Vagina (tissue), 2 donors: ENCODE measurements at regions of chr12 and their contacts with region 1.

Region 1: GRCh38 chr12:94149119-94149780 is 873 bp downstream of the PLXNC1 start:
- DNase-seq: no peak
- H3K4me3 ChIP-seq: peak overlapping the region; percentile 52 to 87
- H3K27ac ChIP-seq: peak overlapping the region; percentile 79
- H3K4me1 ChIP-seq: peaks cover 27% of the 10 kb centered on the region
- H3K27me3 ChIP-seq: no peaks in the 10 kb centered on the region
- CTCF ChIP-seq: no peak
- POLR2A ChIP-seq: no peak

Region 2: DNA sequence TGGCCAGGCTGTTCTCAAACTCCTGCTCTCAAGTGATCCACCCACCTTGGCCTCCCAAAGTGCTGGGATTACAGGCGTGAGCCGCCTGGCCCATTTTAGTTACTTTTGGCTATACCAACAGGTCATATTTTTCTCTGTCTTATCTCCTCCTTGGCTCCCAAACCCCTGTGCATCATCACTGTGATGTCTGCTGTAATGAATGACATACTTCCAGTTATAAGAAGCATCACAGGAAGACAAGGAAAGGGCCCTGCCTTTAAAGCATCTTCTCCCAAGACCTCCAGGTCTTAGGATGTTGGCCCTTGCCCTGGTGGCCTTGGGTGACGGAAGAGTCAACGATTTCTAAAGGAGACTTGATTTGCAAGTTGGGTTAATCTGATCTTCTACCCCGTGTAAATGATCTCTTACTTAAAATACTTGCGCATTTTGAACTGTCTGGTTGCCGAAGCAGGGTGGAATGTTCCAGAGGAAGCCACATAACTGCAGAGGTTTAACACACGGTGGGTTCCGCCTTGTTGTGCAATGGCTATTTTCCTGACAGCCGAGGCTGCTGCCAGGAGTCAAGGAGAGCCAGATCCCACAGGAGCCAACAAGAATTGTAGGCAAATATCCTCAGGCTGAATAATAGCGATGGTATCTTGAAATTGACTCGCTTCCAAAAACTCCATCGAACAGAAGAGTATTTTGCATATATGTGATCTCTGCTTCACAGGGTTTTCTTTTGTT is 56.6 kb before region 1 on chr12:
- intact Hi-C with region 1: no loop called
- DNase-seq: no peak
- H3K4me3 ChIP-seq: no peak overlapping the region
- H3K27ac ChIP-seq: peak overlapping the region; percentile 2
- H3K4me1 ChIP-seq: no peaks in the 10 kb centered on the region
- H3K27me3 ChIP-seq: no peaks in the 10 kb centered on the region
- CTCF ChIP-seq: no peak
- POLR2A ChIP-seq: no peak

Region 3: GRCh38 chr12:94123127-94123526 is 26.1 kb before region 1 on chr12:
- intact Hi-C with region 1: no loop called
- DNase-seq: no peak
- H3K4me3 ChIP-seq: no peak overlapping the region
- H3K27ac ChIP-seq: no peak overlapping the region
- H3K4me1 ChIP-seq: no peaks in the 10 kb centered on the region
- H3K27me3 ChIP-seq: no peaks in the 10 kb centered on the region
- CTCF ChIP-seq: no peak
- POLR2A ChIP-seq: no peak

Region 4: DNA sequence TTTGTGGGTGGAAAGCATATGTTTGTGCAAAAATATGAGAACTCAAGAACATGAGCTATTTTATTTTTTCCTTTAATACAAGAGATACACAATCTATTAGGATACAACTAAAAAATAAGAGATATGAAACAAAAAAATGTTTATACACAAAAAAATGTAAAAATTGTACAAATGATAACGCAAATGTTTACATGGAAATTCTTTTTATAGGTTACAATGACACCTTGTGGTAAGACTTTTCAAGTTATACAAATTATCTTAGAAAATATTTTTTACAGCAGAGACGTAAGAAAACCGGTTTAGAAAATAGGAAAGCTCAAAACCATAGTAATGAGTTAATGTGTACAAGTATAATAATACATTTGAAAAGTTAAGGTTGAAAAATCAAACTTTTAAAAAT is 284.9 kb after region 1 on chr12:
- intact Hi-C with region 1: loop called (anchors 5 kb)
- DNase-seq: no peak
- H3K4me3 ChIP-seq: no peak overlapping the region
- H3K27ac ChIP-seq: no peak overlapping the region
- H3K4me1 ChIP-seq: no peaks in the 10 kb centered on the region
- H3K27me3 ChIP-seq: no peaks in the 10 kb centered on the region
- CTCF ChIP-seq: no peak
- POLR2A ChIP-seq: no peak